ENCODE measurements at regions of chr11 and their contacts with region 1.

Region 1: GRCh38 chr11:117426269-117426685 is 98.6 kb downstream of the CEP164 start:
- DNase-seq: peak; percentile 32 to 83 (median 65)
- ATAC-seq: peak; percentile 54
- H3K4me3 ChIP-seq: no peak overlapping the region
- H3K4me3 Mint-ChIP-seq: no peak overlapping the region
- H3K27ac ChIP-seq: no peak overlapping the region
- H3K27ac Mint-ChIP-seq: no peak overlapping the region
- H3K4me1 ChIP-seq: peaks cover 3% of the 10 kb centered on the region
- H3K4me1 Mint-ChIP-seq: no peaks in the 10 kb centered on the region
- H3K27me3 ChIP-seq: peaks cover 0 to 3% of the 10 kb centered on the region in 2 experiments
- H3K27me3 Mint-ChIP-seq: peaks cover 4% of the 10 kb centered on the region
- CTCF ChIP-seq: peak; percentile 97

Region 2: DNA sequence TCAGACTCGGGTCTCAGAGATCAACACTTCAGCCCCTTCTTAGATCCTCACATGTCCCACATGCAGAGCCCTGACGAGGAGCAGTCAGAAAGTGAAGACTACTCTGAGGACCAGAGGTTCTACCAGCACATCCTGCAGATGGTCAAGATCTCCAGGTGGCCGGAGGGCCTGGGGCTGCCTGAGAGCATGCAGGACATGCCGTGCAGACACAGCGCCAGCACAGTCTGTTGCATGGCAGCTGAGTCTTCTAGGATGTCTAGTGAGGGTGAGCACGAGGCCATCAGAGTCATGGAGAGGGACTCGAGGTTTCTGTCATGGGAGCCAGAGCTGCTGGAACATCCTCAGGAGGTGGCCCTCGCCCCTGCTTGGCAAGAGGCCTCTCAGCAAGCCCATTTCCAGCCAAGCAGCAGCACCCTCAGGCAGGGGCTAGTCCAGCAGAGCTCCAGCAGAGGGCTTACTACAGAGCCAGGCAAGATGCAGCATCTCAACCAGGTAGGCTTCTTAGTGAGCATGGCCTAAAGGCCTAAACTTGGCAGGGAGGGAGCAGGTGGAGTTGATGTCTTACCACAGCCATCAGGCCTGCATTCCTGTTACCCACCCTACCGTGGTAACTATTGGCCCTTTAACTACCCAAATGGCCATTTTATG is 70.0 kb before region 1 on chr11:
- CTCF ChIA-PET with region 1: no interaction called
- POLR2A ChIA-PET with region 1: no interaction called
- intact Hi-C with region 1: no loop called
- DNase-seq: no peak
- ATAC-seq: no peak
- H3K4me3 ChIP-seq: no peak overlapping the region
- H3K4me3 Mint-ChIP-seq: no peak overlapping the region
- H3K27ac ChIP-seq: no peak overlapping the region
- H3K27ac Mint-ChIP-seq: no peak overlapping the region
- H3K4me1 ChIP-seq: no peaks in the 10 kb centered on the region
- H3K4me1 Mint-ChIP-seq: no peaks in the 10 kb centered on the region
- H3K27me3 ChIP-seq: no peaks in the 10 kb centered on the region
- H3K27me3 Mint-ChIP-seq: no peaks in the 10 kb centered on the region
- CTCF ChIP-seq: no peak

Region 3: GRCh38 chr11:117410861-117411710 is 15.2 kb before region 1 on chr11:
- CTCF ChIA-PET with region 1: interaction called, 53 read pairs
- POLR2A ChIA-PET with region 1: no interaction called
- intact Hi-C with region 1: no loop called
- DNase-seq: no peak
- ATAC-seq: no peak
- H3K4me3 ChIP-seq: no peak overlapping the region
- H3K4me3 Mint-ChIP-seq: no peak overlapping the region
- H3K27ac ChIP-seq: no peak overlapping the region
- H3K27ac Mint-ChIP-seq: no peak overlapping the region
- H3K4me1 ChIP-seq: no peaks in the 10 kb centered on the region
- H3K4me1 Mint-ChIP-seq: no peaks in the 10 kb centered on the region
- H3K27me3 ChIP-seq: no peaks in the 10 kb centered on the region
- H3K27me3 Mint-ChIP-seq: no peaks in the 10 kb centered on the region
- CTCF ChIP-seq: no peak